ENCODE measurements at regions of chr4 and their contacts with region 1.

Region 1: DNA sequence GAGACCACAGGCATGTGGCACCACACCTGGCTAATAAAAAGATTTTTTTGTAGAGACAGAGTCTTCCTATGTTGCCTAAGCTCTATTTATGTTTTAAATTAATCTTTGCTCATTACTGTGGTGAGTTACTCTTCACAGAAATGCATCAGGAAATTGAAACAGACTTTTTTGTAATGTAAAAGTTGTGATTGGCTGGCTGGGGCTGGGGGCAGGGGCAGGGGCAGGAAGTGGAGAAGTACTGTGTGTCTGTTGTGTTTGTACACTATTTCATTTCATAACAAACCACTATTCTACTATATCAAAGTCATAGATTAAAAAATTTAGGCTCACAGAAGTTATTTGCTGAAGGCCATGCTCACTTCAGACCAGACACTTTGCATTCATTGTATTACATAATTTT is 19.1 kb upstream of the ABRAXAS1 start:
- DNase-seq: no peak
- ATAC-seq: no peak
- H3K4me3 ChIP-seq: no peak overlapping the region
- H3K27ac ChIP-seq: no peak overlapping the region
- H3K4me1 ChIP-seq: no peaks in the 10 kb centered on the region
- H3K27me3 ChIP-seq: no peaks in the 10 kb centered on the region
- CTCF ChIP-seq: no peak
- POLR2A ChIP-seq: no peak
- RAD21 ChIP-seq: no peak

Region 2: GRCh38 chr4:83316459-83317165 is 187.4 kb before region 1 on chr4:
- CTCF ChIA-PET with region 1: no interaction called
- POLR2A ChIA-PET with region 1: no interaction called
- RAD21 ChIA-PET with region 1: no interaction called
- intact Hi-C with region 1: no loop called
- DNase-seq: no peak
- ATAC-seq: no peak
- H3K4me3 ChIP-seq: no peak overlapping the region
- H3K27ac ChIP-seq: no peak overlapping the region
- H3K4me1 ChIP-seq: no peaks in the 10 kb centered on the region
- H3K27me3 ChIP-seq: no peaks in the 10 kb centered on the region
- CTCF ChIP-seq: no peak
- POLR2A ChIP-seq: no peak
- RAD21 ChIP-seq: no peak

Region 3: GRCh38 chr4:83582289-83582769 is 78.4 kb after region 1 on chr4:
- CTCF ChIA-PET with region 1: interaction called, 7 read pairs
- POLR2A ChIA-PET with region 1: no interaction called
- RAD21 ChIA-PET with region 1: no interaction called
- intact Hi-C with region 1: loop called (anchors 2 kb)
- DNase-seq: no peak
- ATAC-seq: peak; percentile 47; the same call in 1 of the 2 replicates
- H3K4me3 ChIP-seq: no peak overlapping the region
- H3K27ac ChIP-seq: no peak overlapping the region
- H3K4me1 ChIP-seq: peaks cover 0 to 5% of the 10 kb centered on the region in 2 experiments; a peak in 1 of 4 replicates
- H3K27me3 ChIP-seq: no peaks in the 10 kb centered on the region
- CTCF ChIP-seq: peak in 2 of 3 experiments; percentile 6 to 29; a peak in 2 of 6 replicates
- POLR2A ChIP-seq: no peak
- RAD21 ChIP-seq: peak; percentile 57

Measured in HCT116 (cell line).